ENCODE measurements at regions of chr7 and their contacts with region 1.

Region 1: GRCh38 chr7:89451911-89452310 is 656.4 kb upstream of the TEX47 start:
- DNase-seq: no peak
- H3K4me3 ChIP-seq: no peak overlapping the region
- H3K27ac ChIP-seq: no peak overlapping the region
- H3K4me1 ChIP-seq: no peaks in the 10 kb centered on the region
- H3K27me3 ChIP-seq: no peaks in the 10 kb centered on the region
- CTCF ChIP-seq: no peak
- EP300 ChIP-seq: no peak
- POLR2A ChIP-seq: no peak

Region 2: GRCh38 chr7:89549768-89550167 is 97.9 kb after region 1 on chr7:
- in situ Hi-C with region 1: loop called in 1 of 4 experiments (anchors 25 kb)
- intact Hi-C with region 1: no loop called
- DNase-seq: no peak
- H3K4me3 ChIP-seq: no peak overlapping the region
- H3K27ac ChIP-seq: no peak overlapping the region
- H3K4me1 ChIP-seq: no peaks in the 10 kb centered on the region
- H3K27me3 ChIP-seq: no peaks in the 10 kb centered on the region
- CTCF ChIP-seq: no peak
- EP300 ChIP-seq: no peak
- POLR2A ChIP-seq: no peak

Measured in transverse colon (tissue), 4 donors.